Naive thymus-derived CD8-positive, alpha-beta T cell (primary cell): ENCODE measurements at regions of chr7 and their contacts with region 1.

Region 1: GRCh38 chr7:100221231-100221718 is 1.5 kb downstream of the PVRIG start:
- DNase-seq: peak; percentile 54 to 94 (median 84)
- ATAC-seq: peak; percentile 62 to 80
- H3K4me3 Mint-ChIP-seq: peak overlapping the region; percentile 88 to 99 (median 96)
- H3K27ac Mint-ChIP-seq: peak overlapping the region; percentile 96 to 100 (median 98)
- H3K4me1 Mint-ChIP-seq: peaks cover 26 to 80% (median 71%) of the 10 kb centered on the region in 4 donors
- H3K27me3 Mint-ChIP-seq: peaks cover 0 to 2% (median 0%) of the 10 kb centered on the region in 5 donors

Region 2: DNA sequence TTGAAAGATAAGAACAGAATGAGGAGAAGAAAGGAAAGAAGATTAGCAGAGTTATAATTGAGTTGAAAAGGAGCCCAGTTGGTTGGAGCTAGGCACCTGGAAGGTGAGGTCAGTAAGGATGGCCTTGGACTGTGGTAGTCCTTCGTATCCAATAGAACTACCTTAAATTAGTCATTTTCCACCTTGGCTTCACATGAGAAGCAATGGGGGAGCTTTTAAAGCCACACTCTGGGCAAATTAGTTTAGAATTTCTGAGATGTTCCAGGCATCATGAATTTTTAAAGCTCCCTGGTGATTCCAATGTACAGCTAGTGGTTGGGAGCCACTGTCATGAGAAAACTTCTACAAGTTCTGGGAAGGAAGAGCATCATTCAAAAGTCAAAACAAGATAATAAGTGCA is 514.2 kb before region 1 on chr7:
- POLR2A ChIA-PET with region 1: no interaction called
- DNase-seq: no peak
- ATAC-seq: no peak
- H3K4me3 Mint-ChIP-seq: no peak overlapping the region
- H3K27ac Mint-ChIP-seq: peak overlapping the region in 1 of 10 donors; percentile 65
- H3K4me1 Mint-ChIP-seq: no peaks in the 10 kb centered on the region
- H3K27me3 Mint-ChIP-seq: no peaks in the 10 kb centered on the region

Region 3: DNA sequence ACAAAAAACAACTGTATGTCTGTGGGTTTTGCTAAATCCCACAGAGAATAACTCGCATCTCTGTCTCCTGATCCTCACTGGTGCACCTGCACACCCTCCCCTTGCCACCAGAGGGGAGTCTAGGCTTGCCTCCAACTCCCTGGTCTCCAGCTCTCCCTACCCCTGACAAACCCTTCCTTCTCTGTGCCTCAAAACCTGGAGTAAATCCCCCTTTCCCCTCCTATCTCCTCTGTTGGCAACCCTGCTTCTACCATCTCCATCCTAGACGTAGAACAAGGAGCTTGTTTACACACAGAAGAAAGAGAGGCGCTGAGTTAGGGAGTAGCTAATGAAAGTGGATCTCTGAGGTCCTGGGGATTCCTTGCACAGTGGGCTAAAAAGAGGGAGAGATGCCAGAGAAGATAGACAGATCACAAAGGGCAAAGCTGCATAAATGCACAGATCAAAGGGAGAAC is 88.6 kb before region 1 on chr7:
- POLR2A ChIA-PET with region 1: interaction called, 24 read pairs
- DNase-seq: peak; percentile 44 to 82 (median 61)
- ATAC-seq: peak; percentile 77 to 78
- H3K4me3 Mint-ChIP-seq: peak overlapping the region in 3 of 10 donors; percentile 14 to 59 (median 28)
- H3K27ac Mint-ChIP-seq: peak overlapping the region in 8 of 10 donors; percentile 3 to 82 (median 32)
- H3K4me1 Mint-ChIP-seq: peaks cover 9 to 29% (median 24%) of the 10 kb centered on the region in 4 donors
- H3K27me3 Mint-ChIP-seq: no peaks in the 10 kb centered on the region

Region 4: DNA sequence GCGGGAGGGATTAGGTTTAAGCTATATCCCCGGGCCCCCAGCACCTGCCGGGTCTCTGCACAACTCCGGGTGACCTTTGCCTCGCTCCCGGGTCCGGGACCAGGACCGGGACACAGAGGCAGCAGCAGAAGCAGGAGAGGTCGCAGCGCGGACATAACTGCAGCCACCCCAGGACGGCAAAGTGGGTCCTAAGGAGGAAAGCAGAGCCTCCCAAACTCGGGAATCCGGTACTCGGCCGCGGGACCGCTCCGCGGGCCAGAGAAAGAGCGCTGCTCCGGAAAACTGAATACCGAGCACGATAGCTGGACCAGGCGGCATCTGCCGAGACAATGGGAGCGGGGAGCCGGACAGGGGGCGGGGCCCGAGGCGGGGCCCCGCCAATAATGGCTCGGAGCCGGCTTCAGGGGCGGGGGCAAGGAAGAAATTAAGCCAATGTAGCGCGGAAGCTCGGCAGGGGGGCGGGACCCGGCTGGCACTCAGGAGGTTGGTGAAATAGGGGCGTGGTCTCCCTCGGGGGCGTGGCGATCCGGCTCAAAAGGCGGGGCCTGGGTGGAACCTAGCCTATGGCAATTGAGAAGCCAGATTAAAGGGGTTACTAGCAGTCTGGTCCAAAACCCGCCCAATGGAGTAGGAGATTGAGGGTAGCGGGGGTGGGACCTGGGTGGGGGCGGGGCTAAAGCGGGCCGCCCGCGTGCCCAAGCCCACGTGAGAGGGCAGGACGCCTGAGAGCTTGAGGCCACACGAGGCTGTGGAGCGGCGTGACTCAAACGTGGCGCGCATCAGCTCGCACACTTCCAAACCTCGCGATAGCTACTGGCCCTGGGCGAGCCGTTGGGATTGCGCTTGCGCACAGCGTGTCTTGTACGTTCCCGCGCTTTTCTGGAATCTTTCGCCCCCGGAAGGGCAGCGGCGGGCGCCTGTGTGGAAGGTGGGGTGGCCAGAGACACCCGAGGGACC is 44.0 kb before region 1 on chr7 and contains the starts of genes GPC2 and STAG3:
- POLR2A ChIA-PET with region 1: interaction called, 12 read pairs
- DNase-seq: peak; percentile 94 to 99 (median 98)
- ATAC-seq: peak; percentile 87 to 88
- H3K4me3 Mint-ChIP-seq: peak within 1 kb of the TSS; percentile 64 to 83 (median 80)
- H3K27ac Mint-ChIP-seq: peak within 1 kb of the TSS; percentile 22 to 91 (median 81)
- H3K4me1 Mint-ChIP-seq: peaks cover 27 to 62% (median 51%) of the 10 kb centered on the region in 4 donors
- H3K27me3 Mint-ChIP-seq: no peaks in the 10 kb centered on the region
- polyA plus RNA-seq, gene GPC2: 0.09 to 1.1 (median 0.42) TPM
- polyA plus RNA-seq, gene STAG3: 6.0 to 8.6 (median 6.9) TPM